Heart left ventricle (tissue), 16 donors: ENCODE measurements at regions of chr15 and their contacts with region 1.

Region 1: GRCh38 chr15:79724312-79724711 is 172.5 kb downstream of the MTHFS start:
- DNase-seq: no peak
- ATAC-seq: no peak
- H3K4me3 ChIP-seq: no peak overlapping the region
- H3K27ac ChIP-seq: no peak overlapping the region
- H3K4me1 ChIP-seq: no peaks in the 10 kb centered on the region
- H3K27me3 ChIP-seq: peaks cover 0 to 4% (median 0%) of the 10 kb centered on the region in 9 donors
- CTCF ChIP-seq: no peak
- POLR2A ChIP-seq: no peak

Region 2: DNA sequence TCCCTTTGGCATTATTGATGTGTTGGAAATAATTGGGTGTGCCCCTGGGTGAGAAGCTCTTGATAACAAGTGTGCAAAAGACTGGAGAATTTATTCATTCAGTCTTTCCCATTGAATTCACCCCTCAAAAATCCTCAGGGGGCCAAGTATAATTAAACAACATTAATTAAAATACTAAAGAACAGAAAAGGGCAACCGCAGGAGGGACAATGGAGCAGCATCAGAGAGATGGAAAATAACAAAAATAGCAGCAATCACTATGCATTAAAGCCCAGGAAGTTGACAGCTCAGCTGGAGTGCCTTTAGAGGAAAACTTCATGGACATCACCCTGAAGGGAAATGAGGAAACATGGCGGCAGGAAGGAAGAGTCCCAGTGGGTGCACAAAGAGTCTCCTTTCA is 64.6 kb before region 1 on chr15:
- intact Hi-C with region 1: loop called in 1 of 10 experiments (anchors 10 kb)
- DNase-seq: no peak
- ATAC-seq: no peak
- H3K4me3 ChIP-seq: no peak overlapping the region
- H3K27ac ChIP-seq: no peak overlapping the region
- H3K4me1 ChIP-seq: no peaks in the 10 kb centered on the region
- H3K27me3 ChIP-seq: peaks cover 0 to 5% (median 0%) of the 10 kb centered on the region in 9 donors
- CTCF ChIP-seq: no peak
- POLR2A ChIP-seq: no peak

Region 3: DNA sequence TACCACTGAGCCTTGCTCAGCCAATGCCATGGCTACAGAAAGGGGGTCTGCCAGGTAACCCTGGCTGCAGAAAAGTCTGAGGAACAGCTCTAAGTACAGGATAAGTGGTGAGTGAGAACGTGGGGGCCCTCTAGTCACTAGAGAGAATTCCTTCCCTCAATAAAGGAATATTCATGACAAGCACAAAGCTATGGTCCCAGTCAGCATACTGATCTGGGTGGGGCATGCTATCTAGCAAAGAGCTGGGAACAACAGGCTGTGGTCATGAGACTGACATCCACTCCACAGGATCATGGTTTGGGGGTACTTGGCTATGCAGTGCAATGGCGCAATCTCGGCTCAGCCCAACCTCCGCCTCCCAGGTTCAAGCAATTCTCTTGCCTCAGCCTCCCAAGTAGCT is 32.1 kb after region 1 on chr15:
- intact Hi-C with region 1: no loop called
- DNase-seq: no peak
- ATAC-seq: no peak
- H3K4me3 ChIP-seq: no peak overlapping the region
- H3K27ac ChIP-seq: no peak overlapping the region
- H3K4me1 ChIP-seq: no peaks in the 10 kb centered on the region
- H3K27me3 ChIP-seq: no peaks in the 10 kb centered on the region
- CTCF ChIP-seq: no peak
- POLR2A ChIP-seq: no peak

Region 4: GRCh38 chr15:79881254-79881653 is 156.9 kb after region 1 on chr15:
- intact Hi-C with region 1: no loop called
- DNase-seq: no peak
- ATAC-seq: no peak
- H3K4me3 ChIP-seq: no peak overlapping the region
- H3K27ac ChIP-seq: no peak overlapping the region
- H3K4me1 ChIP-seq: peaks cover 0 to 9% (median 0%) of the 10 kb centered on the region in 12 donors
- H3K27me3 ChIP-seq: no peaks in the 10 kb centered on the region
- CTCF ChIP-seq: no peak
- POLR2A ChIP-seq: no peak

Region 5: DNA sequence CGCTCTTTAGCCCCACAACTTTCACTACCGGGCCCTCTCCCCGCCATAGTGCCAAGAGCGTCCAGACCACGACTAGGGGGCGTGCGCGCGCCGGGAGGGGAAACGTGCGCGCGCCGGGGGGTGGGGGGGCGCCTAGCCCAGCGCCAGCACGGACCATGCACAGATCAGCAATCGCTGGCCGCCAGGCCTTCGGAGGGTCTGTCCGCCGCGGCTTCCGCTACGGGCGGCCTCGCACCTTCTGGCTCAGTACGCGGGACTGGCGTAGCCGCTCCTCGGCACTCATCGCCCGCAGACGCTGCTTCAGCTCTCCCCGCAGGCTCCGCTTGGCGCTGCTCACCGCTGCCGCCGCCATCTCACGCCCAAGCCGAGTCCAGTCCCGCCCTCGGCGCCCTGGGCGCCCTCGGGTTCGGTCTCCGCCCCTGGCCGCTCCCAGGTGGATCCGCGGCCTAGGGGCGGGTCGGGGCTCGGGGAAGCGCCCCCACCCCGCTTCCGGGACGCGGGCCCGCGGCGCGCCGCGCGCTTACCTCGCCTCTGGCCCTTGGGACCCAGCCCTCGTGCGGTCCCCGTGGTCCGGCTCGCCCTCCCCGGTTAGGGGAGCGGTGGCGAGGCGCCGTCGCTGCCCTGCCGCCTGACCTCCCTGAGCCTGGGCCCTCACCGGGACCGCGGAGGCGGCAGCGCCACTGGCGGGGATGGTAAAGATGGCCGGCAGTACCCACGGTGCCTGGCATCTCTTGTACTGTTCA is 172.5 kb after region 1 on chr15 and contains the start of gene MTHFS:
- intact Hi-C with region 1: no loop called
- DNase-seq: peak; percentile 81 to 92 (median 83)
- ATAC-seq: peak; percentile 93 to 99 (median 98)
- H3K4me3 ChIP-seq: peak within 1 kb of the TSS; percentile 64 to 92 (median 82)
- H3K27ac ChIP-seq: peak within 1 kb of the TSS; percentile 79 to 98 (median 92)
- H3K4me1 ChIP-seq: peaks cover 0 to 30% (median 7%) of the 10 kb centered on the region in 12 donors
- H3K27me3 ChIP-seq: no peaks in the 10 kb centered on the region
- CTCF ChIP-seq: peak in 11 of 12 donors; percentile 27 to 70 (median 52)
- POLR2A ChIP-seq: peak in 1 of 2 donors; percentile 43
- total RNA-seq, gene MTHFS: 5.7 to 24.1 (median 13.2) TPM